HEK293 (cell line): ENCODE measurements at regions of chr17 and their contacts with region 1.

Region 1: GRCh38 chr17:75205037-75205792 is at the start of gene NUP85:
- H3K4me3 ChIP-seq: peak within 1 kb of the TSS; percentile 98
- H3K27ac ChIP-seq: peak within 1 kb of the TSS; percentile 99
- H3K4me1 ChIP-seq: no peaks in the 10 kb centered on the region
- CTCF ChIP-seq: peak; percentile 96

Region 2: DNA sequence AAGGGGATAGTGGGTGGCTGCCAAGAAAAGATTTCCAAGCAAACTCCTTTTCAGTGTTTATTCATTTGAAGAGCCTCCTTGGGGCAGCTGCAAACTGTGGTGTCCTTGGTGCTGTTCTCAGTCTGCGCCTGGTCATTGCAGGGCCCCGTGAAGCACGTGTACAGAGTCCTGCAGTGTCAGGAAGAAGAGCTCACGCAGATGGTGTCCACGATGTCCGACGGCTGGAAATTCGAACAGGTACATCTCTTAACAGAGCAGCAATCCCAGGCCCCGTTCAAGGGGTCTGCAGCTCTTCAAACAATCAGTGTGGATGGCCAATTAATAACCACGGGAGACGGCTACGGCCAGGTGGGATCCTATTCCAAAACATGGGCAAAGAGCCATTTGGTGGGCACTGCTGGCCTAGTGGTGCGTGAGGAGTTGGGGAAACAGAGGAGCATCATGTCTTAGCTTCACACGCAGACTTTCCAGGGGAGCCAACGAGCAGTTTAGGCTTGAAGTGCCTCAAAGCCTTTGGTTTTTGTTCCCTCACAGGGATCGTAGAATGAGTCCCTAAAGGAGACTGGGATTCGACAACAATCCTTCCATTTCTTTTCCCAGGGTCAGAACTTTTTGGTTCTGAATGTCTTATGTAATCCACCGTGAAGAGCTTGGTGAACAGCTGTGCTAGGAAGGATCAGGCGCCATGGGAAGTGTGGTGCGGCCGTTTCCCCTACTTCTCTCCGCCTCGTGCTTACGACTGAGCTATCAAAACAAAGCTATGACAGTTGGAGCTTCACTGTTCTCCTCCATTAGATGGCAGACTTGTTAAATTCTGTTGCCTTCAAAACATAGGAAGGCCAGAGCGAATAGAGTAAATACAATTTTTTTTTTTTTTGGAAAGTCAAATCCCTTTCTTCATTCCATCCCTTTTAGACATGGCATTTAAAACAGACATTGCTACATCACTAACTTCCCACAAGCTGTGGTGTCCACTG is 145.6 kb before region 1 on chr17:
- CTCF ChIA-PET with region 1: interaction called, 10 read pairs
- POLR2A ChIA-PET with region 1: interaction called, 3 read pairs
- H3K4me3 ChIP-seq: no peak overlapping the region
- H3K27ac ChIP-seq: 0 out of 2 replicates have a peak overlapping the region, but pooled peaks have one; percentile 44
- H3K4me1 ChIP-seq: no peaks in the 10 kb centered on the region
- CTCF ChIP-seq: no peak

Region 3: GRCh38 chr17:75131280-75132017 is 73.8 kb before region 1 on chr17 and contains the start of gene NT5C:
- CTCF ChIA-PET with region 1: interaction called, 11 read pairs
- POLR2A ChIA-PET with region 1: interaction called, 12 read pairs
- H3K4me3 ChIP-seq: peak within 1 kb of the TSS; percentile 61
- H3K27ac ChIP-seq: peak within 1 kb of the TSS; percentile 94
- H3K4me1 ChIP-seq: peaks cover 3% of the 10 kb centered on the region; the same call in 1 of the 2 replicates
- CTCF ChIP-seq: peak; percentile 87

Region 4: DNA sequence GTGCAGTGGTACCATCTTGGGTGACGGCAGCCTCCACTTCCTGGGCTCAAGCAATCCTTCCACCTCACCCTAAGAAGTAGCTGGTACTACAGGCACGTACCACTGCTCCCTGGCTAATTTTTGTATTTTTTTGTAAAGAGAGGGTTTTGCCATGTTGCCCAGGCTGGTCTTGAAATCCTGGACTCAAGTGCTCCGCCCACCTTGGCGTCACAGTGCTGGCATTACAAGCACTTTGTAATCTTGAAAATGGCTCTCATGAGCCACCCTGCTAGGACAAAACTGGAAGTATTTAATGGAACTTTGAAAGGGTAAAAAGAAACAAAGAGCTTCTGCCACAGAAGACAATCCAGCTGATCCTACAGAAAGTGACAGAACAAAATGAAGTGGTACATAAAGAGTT is 31.7 kb before region 1 on chr17:
- CTCF ChIA-PET with region 1: interaction called, 28 read pairs
- POLR2A ChIA-PET with region 1: interaction called, 6 read pairs
- H3K4me3 ChIP-seq: no peak overlapping the region
- H3K27ac ChIP-seq: no peak overlapping the region; the same call in 1 of the 2 replicates
- H3K4me1 ChIP-seq: no peaks in the 10 kb centered on the region
- CTCF ChIP-seq: no peak

Region 5: DNA sequence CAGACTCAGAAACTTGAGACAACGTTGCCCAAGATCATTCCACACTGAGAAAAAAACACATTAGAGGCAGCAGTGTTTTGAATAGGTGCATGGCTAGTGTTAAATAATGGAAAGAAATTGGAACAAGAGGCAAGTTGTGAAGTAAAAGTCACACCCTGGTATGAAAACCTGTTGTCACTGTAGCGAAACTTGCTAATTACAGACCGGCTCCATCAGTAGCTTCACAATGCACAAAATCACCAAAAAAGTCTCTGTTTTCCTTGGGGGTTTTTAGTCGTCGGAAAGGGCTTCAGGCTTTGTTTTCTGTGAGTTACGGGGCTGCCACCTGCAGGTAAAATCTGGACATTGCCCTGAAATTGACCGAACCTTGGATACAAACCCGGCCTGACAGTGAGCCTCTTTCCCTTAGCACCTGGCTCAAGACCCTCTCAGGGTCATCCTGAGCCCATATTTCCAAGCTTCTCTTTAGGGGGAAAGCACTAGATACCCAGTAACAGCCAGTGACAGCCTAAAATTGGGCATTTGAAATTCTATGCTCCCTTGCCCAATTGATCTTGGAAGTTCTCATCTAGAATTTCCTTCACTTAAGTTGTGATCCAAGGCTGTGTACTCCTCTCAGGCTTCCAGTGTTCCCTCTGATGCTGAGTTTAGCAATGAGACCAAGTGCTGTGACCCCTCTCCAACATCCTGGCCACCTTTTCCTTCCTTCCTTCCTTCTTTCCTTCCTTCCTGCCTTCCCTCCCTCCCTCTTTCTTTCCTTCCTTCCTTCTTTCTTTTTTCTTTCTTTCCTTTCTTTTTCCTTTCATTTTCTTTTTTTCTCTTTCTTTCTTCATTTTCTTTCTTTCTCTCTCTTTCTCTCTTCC is 207.5 kb after region 1 on chr17:
- CTCF ChIA-PET with region 1: interaction called, 10 read pairs
- POLR2A ChIA-PET with region 1: no interaction called
- H3K4me3 ChIP-seq: no peak overlapping the region
- H3K27ac ChIP-seq: no peak overlapping the region
- H3K4me1 ChIP-seq: no peaks in the 10 kb centered on the region
- CTCF ChIP-seq: peak; percentile 81